Endothelial cell of umbilical vein (primary cell): ENCODE measurements at regions of chr9 and their contacts with region 1.

Region 1: GRCh38 chr9:93159601-93160471 is 24.1 kb upstream of the WNK2 start:
- DNase-seq: peak; percentile 66
- H3K4me3 ChIP-seq: no peak overlapping the region
- H3K27ac ChIP-seq: no peak overlapping the region
- H3K4me1 ChIP-seq: no peaks in the 10 kb centered on the region
- H3K27me3 ChIP-seq: no peaks in the 10 kb centered on the region
- CTCF ChIP-seq: peak; percentile 98
- POLR2A ChIP-seq: no peak

Region 2: DNA sequence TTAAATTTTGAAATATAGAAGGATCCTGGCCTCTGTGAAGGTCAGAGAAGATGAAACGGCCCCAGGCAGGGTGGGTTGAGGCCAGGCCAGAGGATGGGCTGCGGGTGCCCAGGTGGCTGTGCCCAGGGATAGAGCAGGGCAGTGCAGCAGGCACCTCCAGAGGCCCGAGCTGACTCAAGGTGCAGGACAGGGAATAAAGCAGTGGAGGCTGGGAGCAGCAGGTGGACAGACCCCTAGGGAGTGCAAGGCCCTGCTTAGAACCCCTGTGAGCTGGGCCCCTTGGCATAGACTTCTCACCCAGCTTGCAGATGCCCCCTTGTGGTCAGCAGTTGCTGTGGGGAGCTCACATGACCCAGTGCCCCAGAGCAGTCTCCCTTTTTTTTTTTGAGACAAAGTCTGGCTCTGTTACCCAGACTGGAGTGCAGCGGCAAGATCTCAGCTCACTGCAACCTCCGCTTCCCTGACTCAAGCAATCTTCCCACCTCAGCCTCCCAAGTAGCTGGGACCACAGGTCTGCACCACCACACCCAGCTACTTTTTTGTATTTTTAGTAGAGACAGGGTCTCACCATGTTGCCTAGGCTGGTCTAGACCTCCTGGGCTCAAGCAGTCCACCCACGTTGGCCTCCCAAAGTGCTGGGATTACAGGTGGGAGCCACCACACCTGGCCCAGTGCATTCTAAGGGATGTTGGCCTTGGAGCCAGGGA is 142.9 kb after region 1 on chr9:
- CTCF ChIA-PET with region 1: interaction called, 32 read pairs
- POLR2A ChIA-PET with region 1: no interaction called
- dilution Hi-C with region 1: no loop called
- intact Hi-C with region 1: loop called (anchors 1 kb)
- DNase-seq: peak; percentile 44
- H3K4me3 ChIP-seq: no peak overlapping the region
- H3K27ac ChIP-seq: no peak overlapping the region
- H3K4me1 ChIP-seq: no peaks in the 10 kb centered on the region
- H3K27me3 ChIP-seq: no peaks in the 10 kb centered on the region
- CTCF ChIP-seq: peak; percentile 53 to 82
- POLR2A ChIP-seq: no peak

Region 3: DNA sequence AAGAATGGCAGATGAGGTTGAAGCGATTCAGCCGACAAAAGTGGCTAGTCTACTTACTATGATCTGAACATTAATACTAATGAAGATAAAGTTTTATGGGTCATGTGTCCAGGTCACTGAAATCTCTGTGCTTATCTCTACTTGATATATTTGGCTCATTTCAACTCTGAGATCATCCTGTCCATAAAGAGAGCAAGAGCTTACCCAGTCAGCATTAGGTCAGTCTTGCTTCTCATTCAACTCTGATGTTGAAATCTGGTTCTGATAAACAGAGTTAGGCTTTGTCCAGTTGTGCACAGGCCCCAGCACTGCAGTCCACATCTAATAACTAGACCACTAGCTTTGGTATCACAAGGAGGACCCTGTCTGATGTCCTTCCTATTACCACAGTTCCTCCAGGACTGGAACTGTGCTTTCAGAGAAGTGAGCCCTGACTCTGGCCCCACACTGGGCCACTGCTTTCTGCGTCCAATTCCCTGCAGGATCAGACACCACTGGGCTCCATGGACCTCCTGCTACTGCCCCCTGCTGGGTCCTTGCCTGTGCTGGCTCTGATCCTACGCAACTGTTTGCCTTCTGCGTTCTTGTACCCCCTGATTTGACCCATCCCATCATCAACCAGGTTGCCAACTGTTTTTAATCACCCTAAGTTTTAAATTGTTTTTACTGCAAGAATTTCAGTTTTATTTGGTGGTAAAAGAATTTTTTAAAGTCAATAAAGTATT is 268.0 kb after region 1 on chr9:
- CTCF ChIA-PET with region 1: no interaction called
- POLR2A ChIA-PET with region 1: no interaction called
- dilution Hi-C with region 1: no loop called
- intact Hi-C with region 1: loop called (anchors 1 kb)
- DNase-seq: no peak
- H3K4me3 ChIP-seq: no peak overlapping the region
- H3K27ac ChIP-seq: no peak overlapping the region
- H3K4me1 ChIP-seq: no peaks in the 10 kb centered on the region
- H3K27me3 ChIP-seq: peaks cover 4 to 10% of the 10 kb centered on the region in 2 experiments
- CTCF ChIP-seq: peak; percentile 19 to 30
- POLR2A ChIP-seq: no peak

Region 4: DNA sequence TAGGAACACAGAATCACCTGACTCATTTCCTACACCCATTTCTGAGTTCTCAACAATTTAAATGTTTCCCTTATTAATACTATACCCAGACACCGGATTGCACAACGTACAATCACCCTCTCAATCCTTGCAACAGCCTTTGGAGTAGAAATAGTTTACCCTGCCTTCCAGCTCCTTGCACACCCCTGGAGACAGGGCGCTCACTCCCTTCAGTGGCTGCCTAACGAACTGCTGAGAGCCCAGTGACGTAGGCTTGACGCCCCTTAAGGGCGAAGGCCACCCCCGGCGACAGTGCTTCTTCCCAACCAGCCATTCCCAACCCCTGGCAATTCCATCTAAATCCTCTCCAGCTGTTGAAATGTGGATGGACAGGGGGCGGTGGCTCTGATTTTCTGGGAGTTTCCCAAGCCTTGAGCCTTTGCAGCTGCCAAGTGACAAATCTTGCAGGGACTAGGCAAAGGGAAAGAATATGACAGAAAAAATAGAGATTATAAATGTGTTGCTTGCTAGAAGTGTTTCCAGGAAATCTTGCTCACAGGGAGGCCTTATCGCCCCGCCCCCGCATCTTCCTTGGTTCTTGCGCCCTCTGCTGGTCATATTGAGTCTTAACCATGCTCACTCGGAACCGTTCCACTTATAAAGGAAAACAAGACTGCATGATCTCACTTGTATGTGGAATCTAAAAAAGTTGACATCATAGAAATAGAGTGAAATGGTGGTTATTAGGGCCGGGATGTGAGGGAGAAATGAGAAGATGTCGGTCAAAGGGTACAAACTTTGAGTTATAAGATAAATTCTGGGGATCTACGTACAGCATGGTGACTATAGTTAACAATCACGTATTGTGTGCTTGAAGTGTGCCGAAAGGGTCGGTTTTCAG is 803.0 kb after region 1 on chr9:
- CTCF ChIA-PET with region 1: no interaction called
- POLR2A ChIA-PET with region 1: no interaction called
- dilution Hi-C with region 1: no loop called
- intact Hi-C with region 1: loop called (anchors 2 kb)
- DNase-seq: peak; percentile 87
- H3K4me3 ChIP-seq: no peak overlapping the region
- H3K27ac ChIP-seq: no peak overlapping the region
- H3K4me1 ChIP-seq: no peaks in the 10 kb centered on the region
- H3K27me3 ChIP-seq: peaks cover 43 to 45% of the 10 kb centered on the region in 2 experiments
- CTCF ChIP-seq: peak; percentile 70 to 71
- POLR2A ChIP-seq: no peak